IMR-90 (cell line): ENCODE measurements at regions of chr9 and their contacts with region 1.

Region 1: GRCh38 chr9:74810200-74810599 is 77.5 kb downstream of the TRPM6 start:
- DNase-seq: no peak
- ATAC-seq: no peak
- H3K4me3 ChIP-seq: no peak overlapping the region
- H3K27ac ChIP-seq: no peak overlapping the region
- H3K4me1 ChIP-seq: no peaks in the 10 kb centered on the region
- H3K27me3 ChIP-seq: no peaks in the 10 kb centered on the region
- CTCF ChIP-seq: no peak
- POLR2A ChIP-seq: no peak
- RAD21 ChIP-seq: no peak

Region 2: DNA sequence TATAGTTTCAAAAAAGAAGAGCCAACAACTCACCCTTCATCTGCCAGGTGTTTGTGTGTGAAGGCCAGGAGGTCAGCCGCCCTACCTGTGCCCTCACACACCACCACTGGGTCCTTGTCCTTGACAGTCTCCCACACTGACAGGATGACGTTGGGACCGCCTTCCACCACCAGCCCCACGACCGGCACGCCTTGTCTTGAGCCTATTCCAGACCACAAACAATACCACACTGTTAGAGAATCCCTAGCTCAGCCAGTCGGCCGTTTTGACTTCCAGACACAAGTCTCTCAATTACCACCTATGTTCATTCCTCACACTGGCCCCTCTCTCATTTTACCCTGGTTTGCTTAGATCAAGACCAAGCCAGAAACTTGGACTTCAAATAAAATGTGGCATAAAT is 11.4 kb after region 1 on chr9:
- CTCF ChIA-PET with region 1: no interaction called
- POLR2A ChIA-PET with region 1: no interaction called
- dilution Hi-C with region 1: no loop called
- in situ Hi-C with region 1: no loop called
- intact Hi-C with region 1: no loop called
- DNase-seq: no peak
- ATAC-seq: no peak
- H3K4me3 ChIP-seq: no peak overlapping the region
- H3K27ac ChIP-seq: no peak overlapping the region
- H3K4me1 ChIP-seq: no peaks in the 10 kb centered on the region
- H3K27me3 ChIP-seq: peaks cover 2% of the 10 kb centered on the region; the same call in 1 of the 2 replicates
- CTCF ChIP-seq: no peak
- POLR2A ChIP-seq: no peak
- RAD21 ChIP-seq: no peak

Region 3: DNA sequence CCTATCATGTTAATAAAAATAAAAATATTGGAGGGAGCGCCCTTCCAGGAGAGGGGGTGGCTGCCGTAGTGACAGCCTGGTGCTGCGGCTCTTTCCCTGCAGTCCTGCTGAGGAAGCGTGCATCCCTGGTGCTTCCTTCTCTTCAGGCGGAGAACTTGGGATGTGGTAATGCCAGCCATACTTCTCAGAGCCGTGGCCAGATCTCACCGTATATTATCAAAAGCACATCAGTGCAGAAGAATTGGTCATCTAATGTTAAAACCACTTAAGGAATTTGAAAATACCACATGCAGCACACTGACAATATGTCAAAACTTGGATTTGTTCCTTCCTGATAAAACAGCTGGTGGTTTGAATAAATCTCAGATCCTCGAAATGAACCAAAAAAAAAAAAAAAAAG is 124.8 kb after region 1 on chr9:
- CTCF ChIA-PET with region 1: no interaction called
- POLR2A ChIA-PET with region 1: no interaction called
- dilution Hi-C with region 1: no loop called
- in situ Hi-C with region 1: no loop called
- intact Hi-C with region 1: loop called (anchors 10 kb)
- DNase-seq: peak; percentile 16
- ATAC-seq: no peak
- H3K4me3 ChIP-seq: no peak overlapping the region
- H3K27ac ChIP-seq: no peak overlapping the region
- H3K4me1 ChIP-seq: no peaks in the 10 kb centered on the region
- H3K27me3 ChIP-seq: no peaks in the 10 kb centered on the region
- CTCF ChIP-seq: no peak
- POLR2A ChIP-seq: no peak
- RAD21 ChIP-seq: no peak

Region 4: GRCh38 chr9:74963056-74963455 is 152.9 kb after region 1 on chr9:
- CTCF ChIA-PET with region 1: no interaction called
- POLR2A ChIA-PET with region 1: no interaction called
- dilution Hi-C with region 1: no loop called
- in situ Hi-C with region 1: no loop called
- intact Hi-C with region 1: no loop called
- DNase-seq: no peak
- ATAC-seq: no peak
- H3K4me3 ChIP-seq: no peak overlapping the region
- H3K27ac ChIP-seq: no peak overlapping the region
- H3K4me1 ChIP-seq: no peaks in the 10 kb centered on the region
- H3K27me3 ChIP-seq: no peaks in the 10 kb centered on the region
- CTCF ChIP-seq: no peak
- POLR2A ChIP-seq: no peak
- RAD21 ChIP-seq: no peak